Activated T-helper 1 cell treated with anti-CD3 and anti-CD28 coated beads, Interleukin-12 subunit alpha, Interleukin-12 subunit beta, Interleukin-2, Interleukin-4 antibody, amounts not matched to agents 30 ng/mL and 10 ng/mL and 1 ng/mL, durations not matched to agents 14 hours and 24 hours and 36 hours (primary cell): ENCODE measurements at regions of chr19 and their contacts with region 1.

Region 1: GRCh38 chr19:51393959-51394836 is 3.8 kb upstream of the C19orf84 start:
- DNase-seq: peak; percentile 92
- H3K4me3 Mint-ChIP-seq: peak overlapping the region; percentile 88
- H3K27ac Mint-ChIP-seq: peak overlapping the region; percentile 90
- H3K4me1 Mint-ChIP-seq: peaks cover 55% of the 10 kb centered on the region
- H3K27me3 Mint-ChIP-seq: no peaks in the 10 kb centered on the region

Region 2: DNA sequence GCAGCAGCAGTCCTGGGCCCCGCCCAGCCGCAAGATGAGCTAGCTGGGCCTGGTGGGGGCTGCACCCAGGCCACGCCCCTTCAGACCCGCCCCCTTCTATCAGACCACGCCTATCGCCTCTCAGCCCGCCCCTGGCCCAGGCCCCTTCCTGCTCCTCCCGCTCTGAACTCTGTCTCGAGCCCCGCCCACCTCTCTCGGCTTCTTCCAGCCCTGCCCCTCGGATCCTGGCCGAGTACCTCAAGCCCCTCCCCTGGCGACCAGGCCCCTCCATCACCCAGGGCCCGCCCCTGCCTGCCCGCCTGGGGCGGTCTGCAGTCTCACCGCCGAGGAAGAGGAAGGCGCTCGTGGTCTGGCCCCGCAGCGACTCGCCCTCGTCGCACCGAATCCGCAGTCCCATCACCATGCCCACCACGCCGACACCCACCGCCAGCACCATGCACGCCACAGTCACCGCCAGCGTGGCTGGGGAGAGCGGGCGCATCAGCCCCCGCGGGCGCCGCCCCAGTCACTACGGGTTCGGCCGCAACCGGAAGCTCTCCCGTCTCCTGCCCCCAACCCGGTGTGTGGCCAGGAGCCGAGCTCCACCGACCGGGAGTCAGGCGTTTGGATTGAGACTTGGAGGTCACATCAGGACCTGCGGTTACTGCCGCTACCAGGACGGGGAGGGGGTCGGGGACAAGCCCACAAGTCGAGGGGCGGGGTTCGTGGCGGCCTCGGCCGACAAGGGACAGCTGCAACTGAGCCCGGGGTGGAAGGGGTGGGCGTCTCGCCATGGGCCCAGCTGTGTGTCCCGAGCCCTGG is 26.4 kb before region 1 on chr19:
- intact Hi-C with region 1: loop called (anchors 1 kb)
- DNase-seq: peak; percentile 95
- H3K4me3 Mint-ChIP-seq: peak overlapping the region; percentile 98
- H3K27ac Mint-ChIP-seq: peak overlapping the region; percentile 96
- H3K4me1 Mint-ChIP-seq: peaks cover 68% of the 10 kb centered on the region
- H3K27me3 Mint-ChIP-seq: no peaks in the 10 kb centered on the region

Region 3: GRCh38 chr19:51407511-51408131 is 13.4 kb after region 1 on chr19:
- intact Hi-C with region 1: loop called (anchors 1 kb)
- DNase-seq: peak; percentile 12
- H3K4me3 Mint-ChIP-seq: no peak overlapping the region
- H3K27ac Mint-ChIP-seq: no peak overlapping the region
- H3K4me1 Mint-ChIP-seq: peaks cover 7% of the 10 kb centered on the region
- H3K27me3 Mint-ChIP-seq: peaks cover 1% of the 10 kb centered on the region

Region 4: DNA sequence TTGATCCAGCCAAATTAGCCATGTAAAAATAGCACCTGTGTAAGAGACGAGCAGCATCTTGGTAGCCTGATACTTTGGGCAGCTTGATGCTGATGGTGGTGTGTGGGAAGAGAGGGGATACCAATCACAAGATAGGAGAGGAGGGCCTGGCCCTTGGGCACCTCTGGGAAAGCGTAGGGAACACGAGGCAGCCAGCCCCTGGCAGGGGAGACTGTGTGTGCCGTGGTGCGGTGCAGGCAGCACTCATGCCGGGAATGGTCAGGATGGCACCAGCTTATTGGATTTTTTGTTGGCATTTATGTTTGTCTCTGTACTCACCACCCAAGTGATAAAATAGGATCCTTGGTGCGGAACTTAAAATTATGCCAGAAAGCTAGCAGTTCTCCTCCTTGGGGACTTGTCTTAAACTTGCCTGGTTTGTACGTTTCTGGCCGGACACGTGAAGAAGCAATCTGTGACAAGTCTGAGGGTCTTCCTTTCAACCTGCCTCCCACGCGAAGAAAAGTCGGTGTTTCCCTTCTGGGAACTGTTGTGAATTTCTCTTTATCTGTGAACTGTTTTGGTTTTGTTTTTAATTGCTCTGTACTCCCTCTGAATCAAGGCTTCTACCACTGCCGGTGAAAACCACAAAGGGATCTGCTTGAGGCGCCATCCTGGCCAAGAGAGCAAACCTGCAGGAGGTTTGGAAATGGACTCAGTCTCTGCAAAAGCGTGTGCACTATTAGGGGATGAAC is 54.0 kb after region 1 on chr19:
- intact Hi-C with region 1: no loop called
- DNase-seq: peak; percentile 11
- H3K4me3 Mint-ChIP-seq: peak overlapping the region; percentile 74
- H3K27ac Mint-ChIP-seq: peak overlapping the region; percentile 85
- H3K4me1 Mint-ChIP-seq: peaks cover 51% of the 10 kb centered on the region
- H3K27me3 Mint-ChIP-seq: peaks cover 11% of the 10 kb centered on the region

Region 5: GRCh38 chr19:51593969-51594773 is 200.0 kb after region 1 on chr19:
- intact Hi-C with region 1: loop called (anchors 1 kb)
- DNase-seq: peak; percentile 95
- H3K4me3 Mint-ChIP-seq: peak overlapping the region; percentile 92
- H3K27ac Mint-ChIP-seq: peak overlapping the region; percentile 78
- H3K4me1 Mint-ChIP-seq: peaks cover 20% of the 10 kb centered on the region
- H3K27me3 Mint-ChIP-seq: no peaks in the 10 kb centered on the region

Region 6: GRCh38 chr19:51660975-51661600 is 266.9 kb after region 1 on chr19:
- intact Hi-C with region 1: loop called (anchors 1 kb)
- DNase-seq: no peak
- H3K4me3 Mint-ChIP-seq: no peak overlapping the region
- H3K27ac Mint-ChIP-seq: no peak overlapping the region
- H3K4me1 Mint-ChIP-seq: peaks cover 6% of the 10 kb centered on the region
- H3K27me3 Mint-ChIP-seq: peaks cover 14% of the 10 kb centered on the region